Ascending aorta (tissue), 2 donors: ENCODE measurements at regions of chr12 and their contacts with region 1.

Region 1: GRCh38 chr12:614411-614970 is 48.8 kb downstream of the NINJ2 start:
- DNase-seq: no peak
- H3K4me3 ChIP-seq: no peak overlapping the region
- H3K27ac ChIP-seq: no peak overlapping the region
- H3K4me1 ChIP-seq: peaks cover 2 to 8% of the 10 kb centered on the region in 2 donors
- H3K27me3 ChIP-seq: no peaks in the 10 kb centered on the region
- CTCF ChIP-seq: peak in 1 of 3 experiments; percentile 19

Region 2: DNA sequence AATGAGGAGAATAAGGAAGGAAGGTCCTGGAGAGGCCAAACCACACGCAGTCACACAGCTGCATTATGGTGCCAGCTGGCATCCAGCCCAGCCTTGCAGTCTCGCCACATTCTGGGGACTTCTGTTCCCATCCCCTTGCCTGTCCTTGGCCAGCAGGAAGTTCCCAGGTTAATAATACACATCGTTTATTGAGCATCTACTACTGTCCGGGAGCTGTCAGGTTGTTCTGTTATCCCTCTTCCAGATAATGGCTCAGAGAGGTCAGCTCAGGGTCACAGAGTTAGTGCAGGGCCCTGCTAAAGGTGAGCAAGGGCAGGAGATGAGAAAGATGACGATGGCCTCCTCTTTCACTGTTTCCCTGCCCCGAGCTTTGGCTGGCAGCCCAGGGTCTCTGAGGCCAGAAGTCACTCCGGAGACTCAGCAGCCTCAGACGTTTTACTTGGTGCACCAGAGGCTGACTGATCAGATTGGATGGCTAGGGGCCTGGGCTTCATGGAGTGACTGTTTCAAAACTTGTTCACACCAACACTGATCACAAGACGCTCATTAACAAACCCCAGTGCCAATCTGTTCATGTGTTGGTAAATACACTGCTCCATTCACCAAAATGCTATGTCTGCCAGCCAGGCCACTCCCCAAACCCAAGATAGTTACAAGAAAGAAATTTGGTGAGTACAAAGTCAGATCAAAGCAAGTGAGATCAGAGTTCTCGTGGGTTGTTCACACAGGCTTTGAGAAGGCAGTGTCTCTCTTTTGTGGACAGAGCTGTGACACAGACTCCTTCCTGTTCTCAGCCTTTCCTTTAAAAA is 75.6 kb before region 1 on chr12:
- intact Hi-C with region 1: no loop called
- DNase-seq: no peak
- H3K4me3 ChIP-seq: no peak overlapping the region
- H3K27ac ChIP-seq: no peak overlapping the region
- H3K4me1 ChIP-seq: peaks cover 5 to 13% of the 10 kb centered on the region in 2 donors
- H3K27me3 ChIP-seq: no peaks in the 10 kb centered on the region
- CTCF ChIP-seq: no peak

Region 3: GRCh38 chr12:565589-566116 is 48.8 kb before region 1 on chr12:
- intact Hi-C with region 1: no loop called
- DNase-seq: no peak
- H3K4me3 ChIP-seq: no peak overlapping the region
- H3K27ac ChIP-seq: no peak overlapping the region
- H3K4me1 ChIP-seq: peaks cover 0 to 12% of the 10 kb centered on the region in 2 donors
- H3K27me3 ChIP-seq: no peaks in the 10 kb centered on the region
- CTCF ChIP-seq: no peak

Region 4: DNA sequence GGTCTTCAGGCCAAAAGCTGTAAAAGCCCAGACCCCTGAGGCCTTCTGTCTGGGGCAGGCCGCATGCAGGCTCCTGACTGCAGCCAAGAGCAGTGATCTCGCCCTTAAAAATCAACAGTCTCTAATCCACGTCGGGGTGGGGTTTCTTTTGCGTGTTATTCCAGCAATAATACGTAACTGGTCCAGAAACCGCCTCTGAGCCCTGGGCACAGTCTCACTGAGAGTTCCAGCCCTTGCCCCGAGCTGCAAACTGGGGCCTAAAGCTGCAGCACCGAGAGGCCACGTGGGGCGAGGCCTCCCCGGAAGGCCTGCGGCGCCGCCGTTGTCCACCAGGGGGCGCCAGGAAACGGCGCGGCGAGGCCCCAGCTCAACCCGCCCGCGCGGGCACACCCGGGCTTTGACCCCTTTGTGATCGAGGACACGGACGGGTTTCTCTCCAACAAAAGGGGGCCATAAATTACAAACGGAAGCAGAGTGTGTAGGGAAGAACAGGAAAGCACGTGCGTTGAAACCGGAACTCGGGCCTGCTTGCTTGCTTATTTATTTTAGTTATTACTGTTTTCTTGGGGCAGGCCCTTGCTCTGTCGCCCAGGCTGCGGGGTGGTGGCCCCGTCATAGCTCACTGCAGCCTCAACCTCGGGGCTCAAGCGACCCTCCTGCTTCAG is 38.4 kb before region 1 on chr12:
- intact Hi-C with region 1: loop called (anchors 5 kb)
- DNase-seq: peak; percentile 42 to 88
- H3K4me3 ChIP-seq: peak overlapping the region in 1 of 2 donors; percentile 31
- H3K27ac ChIP-seq: peak overlapping the region; percentile 70 to 81
- H3K4me1 ChIP-seq: peaks cover 15 to 29% of the 10 kb centered on the region in 2 donors
- H3K27me3 ChIP-seq: no peaks in the 10 kb centered on the region
- CTCF ChIP-seq: peak; percentile 99 to 100 (median 100)

Region 5: GRCh38 chr12:630656-631632 is 16.5 kb after region 1 on chr12:
- intact Hi-C with region 1: loop called (anchors 2 kb)
- DNase-seq: peak in 1 of 2 donors; percentile 83
- H3K4me3 ChIP-seq: peak overlapping the region; percentile 16 to 22
- H3K27ac ChIP-seq: peak overlapping the region; percentile 80 to 84
- H3K4me1 ChIP-seq: peaks cover 0 to 37% of the 10 kb centered on the region in 2 donors
- H3K27me3 ChIP-seq: no peaks in the 10 kb centered on the region
- CTCF ChIP-seq: no peak